ENCODE measurements at regions of chr12 and their contacts with region 1.

Region 1: GRCh38 chr12:80941916-80942315 is 4.2 kb upstream of the LIN7A start:
- DNase-seq: no peak

Region 2: GRCh38 chr12:80843969-80844368 is 97.9 kb before region 1 on chr12:
- intact Hi-C with region 1: loop called (anchors 5 kb)
- DNase-seq: no peak